ENCODE measurements at regions of chr10 and their contacts with region 1.

Region 1: GRCh38 chr10:102268375-102268888 is 23.1 kb downstream of the GBF1 start:
- DNase-seq: no peak
- H3K4me3 Mint-ChIP-seq: no peak overlapping the region
- H3K27ac Mint-ChIP-seq: peak overlapping the region; percentile 78
- H3K4me1 Mint-ChIP-seq: peaks cover 31% of the 10 kb centered on the region
- H3K27me3 Mint-ChIP-seq: no peaks in the 10 kb centered on the region

Region 2: DNA sequence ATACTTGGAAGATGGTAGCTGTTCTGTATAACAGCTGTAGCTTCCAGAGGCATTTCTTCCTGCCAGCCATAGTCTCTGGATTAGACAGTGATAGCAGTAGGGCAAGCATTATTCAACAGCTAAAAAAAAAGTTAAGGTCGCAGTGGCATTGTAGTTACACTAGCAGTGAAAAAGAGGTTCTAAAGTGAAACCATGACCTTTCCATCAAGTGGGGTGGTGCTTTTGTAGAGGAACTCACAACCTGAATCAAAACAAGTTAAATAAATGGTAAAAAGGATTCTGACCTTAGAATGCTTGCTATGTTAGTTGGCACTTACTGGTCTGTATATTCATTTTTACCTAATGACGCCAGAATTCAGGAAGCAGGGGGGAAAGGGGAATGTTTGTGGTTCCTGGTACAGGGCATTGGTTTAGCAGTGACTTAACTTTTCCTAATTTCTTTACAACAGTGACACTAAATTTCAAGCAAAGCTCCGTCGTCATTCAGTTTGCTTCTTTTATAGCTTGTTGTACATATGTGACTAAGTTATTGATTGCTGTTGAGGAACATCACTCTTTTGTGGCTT is 31.9 kb after region 1 on chr10:
- intact Hi-C with region 1: loop called (anchors 5 kb)
- DNase-seq: no peak
- H3K4me3 Mint-ChIP-seq: peak overlapping the region; percentile 13
- H3K27ac Mint-ChIP-seq: peak overlapping the region; percentile 86
- H3K4me1 Mint-ChIP-seq: peaks cover 18% of the 10 kb centered on the region
- H3K27me3 Mint-ChIP-seq: no peaks in the 10 kb centered on the region

Region 3: GRCh38 chr10:102408728-102409603 is 140.5 kb after region 1 on chr10:
- intact Hi-C with region 1: no loop called
- DNase-seq: peak; percentile 46
- H3K4me3 Mint-ChIP-seq: peak overlapping the region; percentile 85
- H3K27ac Mint-ChIP-seq: peak overlapping the region; percentile 74
- H3K4me1 Mint-ChIP-seq: peaks cover 32% of the 10 kb centered on the region
- H3K27me3 Mint-ChIP-seq: peaks cover 24% of the 10 kb centered on the region

Measured in activated T-helper 2 cell treated with anti-CD3 and anti-CD28 coated beads, Interferon-gamma antibody, Interleukin-2, Interleukin-4, amounts not matched to agents 10 μg/mL and 5 μg/mL and 100 μg/mL, durations not matched to agents 14 hours and 24 hours and 36 hours (primary cell).